ENCODE measurements at regions of chr13 and their contacts with region 1.

Region 1: GRCh38 chr13:26186118-26186870 is 35.8 kb downstream of the RNF6 start:
- DNase-seq: peak; percentile 76 to 89
- H3K4me3 ChIP-seq: peak overlapping the region; percentile 35
- H3K4me1 ChIP-seq: peaks cover 6% of the 10 kb centered on the region
- H3K27me3 ChIP-seq: no peaks in the 10 kb centered on the region

Region 2: DNA sequence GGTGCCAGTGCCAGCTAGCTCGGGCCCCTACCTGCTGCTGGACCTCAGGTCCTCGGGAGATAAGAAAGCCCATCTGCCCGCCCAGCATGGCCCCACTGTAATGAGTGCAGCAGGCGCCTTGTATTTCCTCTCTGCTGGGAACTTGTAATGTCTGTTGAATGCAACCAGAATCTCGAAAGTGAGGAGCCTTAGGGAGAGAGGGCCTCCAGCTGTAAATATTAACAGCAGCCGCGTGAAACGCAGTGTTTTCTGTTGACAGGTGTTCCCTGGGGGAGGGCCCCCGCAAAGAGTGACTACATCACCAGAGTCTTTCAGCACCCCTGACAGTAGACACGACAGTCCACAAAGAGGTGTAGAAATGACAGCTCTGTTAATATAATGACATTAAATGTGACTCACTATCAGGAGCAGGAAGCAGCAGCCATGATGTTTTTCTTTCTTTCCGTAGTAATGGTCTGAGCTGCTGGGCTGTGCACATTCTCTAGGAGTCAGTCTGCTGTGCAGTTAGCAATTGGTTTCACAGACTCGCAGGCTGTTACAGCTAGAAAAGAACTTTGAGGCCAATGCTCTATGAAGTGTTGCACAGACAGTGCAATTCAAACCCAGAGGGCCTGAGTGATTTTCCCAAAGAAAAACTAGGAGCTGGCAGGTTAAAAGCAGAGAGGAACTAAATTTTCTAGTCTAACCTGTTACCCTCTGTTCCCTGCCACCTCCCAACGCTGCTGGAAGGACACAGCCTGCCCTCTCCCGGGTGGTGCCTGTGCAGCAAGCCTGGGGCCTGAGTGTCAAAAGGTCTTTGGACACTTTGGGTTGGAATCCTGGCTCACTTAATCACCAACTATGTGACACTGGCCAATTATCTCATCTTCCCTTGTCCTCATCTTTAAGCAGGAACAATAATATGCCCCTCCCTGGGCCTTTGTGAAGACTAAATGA is 312.6 kb after region 1 on chr13:
- in situ Hi-C with region 1: loop called (anchors 10 kb)
- DNase-seq: no peak
- H3K4me3 ChIP-seq: no peak overlapping the region
- H3K4me1 ChIP-seq: no peaks in the 10 kb centered on the region
- H3K27me3 ChIP-seq: no peaks in the 10 kb centered on the region

Region 3: DNA sequence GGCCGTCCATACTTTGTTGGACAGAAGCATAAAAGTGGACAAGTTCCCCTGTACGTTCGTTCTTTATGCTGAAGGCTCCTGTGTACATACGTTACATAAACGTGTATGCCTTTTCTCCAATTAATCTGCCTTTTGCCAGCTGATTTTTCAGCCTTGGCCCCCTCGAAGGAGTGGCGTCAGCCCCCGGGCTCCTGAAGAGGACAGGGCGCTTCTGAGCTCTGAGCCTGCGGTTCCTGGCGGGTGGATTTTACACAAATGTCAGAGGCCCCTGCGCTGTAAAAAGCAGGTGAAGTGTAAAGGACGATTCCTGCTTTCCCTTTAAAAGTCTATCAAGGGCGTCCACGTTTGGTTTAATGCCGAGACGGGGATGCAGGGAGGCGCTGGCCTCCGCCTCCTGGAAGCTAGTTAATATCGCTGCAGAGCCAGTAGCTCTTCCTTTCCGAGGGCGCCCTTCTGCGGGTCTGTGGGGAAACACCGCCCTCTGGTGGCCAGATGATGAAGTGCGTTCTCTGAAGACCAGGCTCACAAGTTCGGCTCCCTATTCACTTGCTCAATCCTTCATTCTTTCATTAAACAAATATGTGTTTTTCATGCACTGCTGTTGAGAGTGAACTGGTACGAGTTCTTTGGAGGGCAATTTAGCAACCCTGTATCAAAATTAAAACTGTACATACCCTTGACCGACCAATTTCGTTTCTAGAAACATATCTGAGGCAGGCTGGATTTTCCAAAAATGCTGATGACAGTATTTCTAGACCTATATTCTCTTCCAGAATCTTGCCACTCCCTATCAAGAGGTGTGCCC is 512.3 kb after region 1 on chr13:
- in situ Hi-C with region 1: loop called (anchors 5 kb)
- DNase-seq: peak; percentile 61 to 89
- H3K4me3 ChIP-seq: no peak overlapping the region
- H3K4me1 ChIP-seq: no peaks in the 10 kb centered on the region
- H3K27me3 ChIP-seq: peaks cover 4% of the 10 kb centered on the region; the same call in 1 of the 2 replicates

Region 4: GRCh38 chr13:26881178-26881577 is 694.9 kb after region 1 on chr13:
- in situ Hi-C with region 1: loop called (anchors 25 kb)
- DNase-seq: no peak
- H3K4me3 ChIP-seq: no peak overlapping the region
- H3K4me1 ChIP-seq: no peaks in the 10 kb centered on the region
- H3K27me3 ChIP-seq: no peaks in the 10 kb centered on the region

Region 5: GRCh38 chr13:27104606-27105005 is 918.3 kb after region 1 on chr13:
- in situ Hi-C with region 1: no loop called
- DNase-seq: no peak
- H3K4me3 ChIP-seq: no peak overlapping the region
- H3K4me1 ChIP-seq: peaks cover 6% of the 10 kb centered on the region; the same call in 1 of the 2 replicates
- H3K27me3 ChIP-seq: no peaks in the 10 kb centered on the region